K562 (cell line): ENCODE measurements at regions of chr15 and their contacts with region 1.

Region 1: GRCh38 chr15:92714477-92715401 is 59.2 kb upstream of the FAM174B start:
- DNase-seq: peak; percentile 75 to 78 (median 76)
- ATAC-seq: peak; percentile 92
- H3K4me3 ChIP-seq: peak overlapping the region; percentile 13; the same call in 1 of the 2 replicates
- H3K27ac ChIP-seq: no peak overlapping the region
- H3K4me1 ChIP-seq: peaks cover 0 to 17% of the 10 kb centered on the region in 2 experiments; a peak in 2 of 5 replicates
- H3K27me3 ChIP-seq: peaks cover 19 to 49% of the 10 kb centered on the region in 2 experiments
- CTCF ChIP-seq: peak; percentile 86 to 93 (median 91)
- EP300 ChIP-seq: no peak
- POLR2A ChIP-seq: no peak
- RAD21 ChIP-seq: peak; percentile 79 to 87

Region 2: GRCh38 chr15:92473756-92474155 is 241.0 kb before region 1 on chr15:
- CTCF ChIA-PET with region 1: no interaction called
- POLR2A ChIA-PET with region 1: no interaction called
- in situ Hi-C with region 1: no loop called
- intact Hi-C with region 1: no loop called
- DNase-seq: no peak
- ATAC-seq: no peak
- H3K4me3 ChIP-seq: no peak overlapping the region
- H3K27ac ChIP-seq: no peak overlapping the region
- H3K4me1 ChIP-seq: no peaks in the 10 kb centered on the region
- H3K27me3 ChIP-seq: peaks cover 0 to 5% of the 10 kb centered on the region in 2 experiments; a peak in 1 of 5 replicates
- CTCF ChIP-seq: no peak
- EP300 ChIP-seq: no peak
- POLR2A ChIP-seq: no peak
- RAD21 ChIP-seq: no peak

Region 3: DNA sequence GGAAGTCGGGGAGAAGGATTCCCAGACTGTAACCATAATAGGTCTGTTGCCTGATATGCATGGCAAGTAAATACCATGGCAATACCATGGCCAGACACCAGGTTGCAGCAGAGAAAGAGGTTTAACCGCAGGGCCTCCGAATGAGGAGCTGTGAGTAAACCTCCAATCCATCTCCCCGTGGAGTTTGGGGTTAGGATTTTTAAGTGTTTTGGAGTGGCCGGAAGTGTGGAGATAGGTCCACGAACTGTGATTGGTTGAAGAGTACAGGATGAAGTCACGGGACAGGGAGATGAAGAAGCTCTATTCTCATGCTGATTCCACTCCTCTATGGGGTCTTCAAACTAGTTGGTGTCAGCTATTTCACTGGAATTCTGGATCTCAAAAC is 193.1 kb before region 1 on chr15:
- CTCF ChIA-PET with region 1: interaction called, 4 read pairs
- POLR2A ChIA-PET with region 1: interaction called, 3 read pairs
- in situ Hi-C with region 1: no loop called
- intact Hi-C with region 1: loop called (anchors 1 kb)
- DNase-seq: peak; percentile 44 to 58 (median 54)
- ATAC-seq: peak; percentile 95
- H3K4me3 ChIP-seq: no peak overlapping the region
- H3K27ac ChIP-seq: no peak overlapping the region
- H3K4me1 ChIP-seq: no peaks in the 10 kb centered on the region
- H3K27me3 ChIP-seq: peaks cover 0 to 12% of the 10 kb centered on the region in 2 experiments; a peak in 2 of 5 replicates
- CTCF ChIP-seq: peak; percentile 72 to 81 (median 77)
- EP300 ChIP-seq: no peak
- POLR2A ChIP-seq: no peak
- RAD21 ChIP-seq: peak; percentile 69 to 75

Region 4: GRCh38 chr15:92611993-92612745 is 102.6 kb before region 1 on chr15:
- CTCF ChIA-PET with region 1: no interaction called
- POLR2A ChIA-PET with region 1: no interaction called
- in situ Hi-C with region 1: no loop called
- intact Hi-C with region 1: loop called (anchors 5 kb)
- DNase-seq: no peak
- ATAC-seq: peak; percentile 22; the same call in 2 of the 3 replicates
- H3K4me3 ChIP-seq: no peak overlapping the region
- H3K27ac ChIP-seq: no peak overlapping the region
- H3K4me1 ChIP-seq: peaks cover 6 to 15% of the 10 kb centered on the region in 2 experiments; a peak in 4 of 5 replicates
- H3K27me3 ChIP-seq: peaks cover 6 to 35% of the 10 kb centered on the region in 2 experiments
- CTCF ChIP-seq: peak in 1 of 3 experiments; percentile 18; a peak in 1 of 6 replicates
- EP300 ChIP-seq: no peak
- POLR2A ChIP-seq: no peak
- RAD21 ChIP-seq: peak in 1 of 2 experiments; percentile 31; a peak in 2 of 4 replicates

Region 5: DNA sequence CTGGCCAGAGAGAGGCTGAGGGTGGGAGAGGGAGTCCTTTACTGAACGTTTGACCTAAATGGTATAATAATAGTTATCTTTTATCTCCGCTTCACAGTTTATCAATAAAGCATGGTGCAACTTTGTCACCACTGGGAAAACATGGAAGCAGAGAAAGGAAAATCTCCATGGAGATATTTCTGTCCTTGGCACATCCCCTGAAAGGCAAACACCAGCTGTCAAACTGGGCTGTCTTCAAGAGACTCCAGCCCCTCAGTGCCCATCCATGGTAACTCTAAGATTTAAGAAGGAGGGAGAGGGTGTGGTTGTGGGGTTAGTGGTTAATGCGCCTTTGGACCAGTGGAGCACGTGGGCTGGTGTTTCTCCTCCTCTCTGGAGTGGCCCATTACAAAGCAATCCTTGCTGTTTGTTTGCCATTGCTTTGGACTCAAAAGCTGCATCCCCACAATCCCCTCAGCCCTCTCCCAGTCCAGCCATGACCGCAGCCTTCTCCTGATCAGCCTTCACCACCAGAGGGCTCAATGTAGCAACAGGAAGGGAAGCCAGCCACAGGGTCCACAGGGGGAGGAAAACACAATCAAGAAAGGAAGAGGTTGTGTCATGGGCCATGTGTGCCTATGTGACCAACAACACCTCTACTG is 20.9 kb before region 1 on chr15:
- CTCF ChIA-PET with region 1: interaction called, 3 read pairs
- POLR2A ChIA-PET with region 1: no interaction called
- in situ Hi-C with region 1: no loop called
- intact Hi-C with region 1: loop called (anchors 2 kb)
- DNase-seq: peak; percentile 24 to 63 (median 46)
- ATAC-seq: peak; percentile 98
- H3K4me3 ChIP-seq: no peak overlapping the region
- H3K27ac ChIP-seq: no peak overlapping the region
- H3K4me1 ChIP-seq: no peaks in the 10 kb centered on the region
- H3K27me3 ChIP-seq: peaks cover 3 to 7% of the 10 kb centered on the region in 2 experiments; a peak in 3 of 5 replicates
- CTCF ChIP-seq: peak; percentile 61 to 77 (median 71)
- EP300 ChIP-seq: no peak
- POLR2A ChIP-seq: no peak
- RAD21 ChIP-seq: peak; percentile 20 to 65; a peak in 2 of 4 replicates